ENCODE measurements at regions of chr17 and their contacts with region 1.

Region 1: DNA sequence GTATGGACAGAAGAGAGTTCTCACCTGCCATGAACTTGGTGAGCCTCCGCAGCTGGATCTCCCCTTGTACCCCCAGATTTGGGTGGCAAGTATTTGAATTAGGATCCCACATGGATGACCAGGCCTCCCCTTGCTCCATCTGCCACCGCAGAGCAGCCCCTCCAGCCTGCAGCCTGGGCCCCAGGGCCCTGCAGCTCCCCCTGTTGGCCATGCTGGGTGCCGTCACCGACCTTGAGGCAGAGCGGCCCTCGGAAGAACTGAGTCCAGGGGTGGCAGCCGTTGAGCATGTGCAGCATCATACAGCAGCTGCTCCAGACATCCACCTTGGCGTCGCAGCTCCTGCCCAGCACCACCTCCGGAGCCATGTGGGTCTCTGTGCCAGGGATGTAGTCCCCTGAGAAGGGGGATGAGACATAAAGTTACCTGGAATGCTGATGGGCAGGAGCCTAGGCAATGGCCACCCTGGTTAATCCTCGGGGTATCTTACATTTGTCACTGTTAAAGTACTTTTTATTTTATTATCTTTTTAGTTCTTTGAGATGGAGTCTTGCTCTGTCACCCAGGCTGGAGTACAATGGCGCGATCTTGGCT is 9.0 kb upstream of the SPATA32 start:
- DNase-seq: peak; percentile 81
- ATAC-seq: peak; percentile 94
- H3K4me3 Mint-ChIP-seq: no peak overlapping the region
- H3K27ac Mint-ChIP-seq: no peak overlapping the region
- H3K4me1 Mint-ChIP-seq: peaks cover 8% of the 10 kb centered on the region
- H3K27me3 Mint-ChIP-seq: no peaks in the 10 kb centered on the region
- CTCF ChIP-seq: peak; percentile 79

Region 2: DNA sequence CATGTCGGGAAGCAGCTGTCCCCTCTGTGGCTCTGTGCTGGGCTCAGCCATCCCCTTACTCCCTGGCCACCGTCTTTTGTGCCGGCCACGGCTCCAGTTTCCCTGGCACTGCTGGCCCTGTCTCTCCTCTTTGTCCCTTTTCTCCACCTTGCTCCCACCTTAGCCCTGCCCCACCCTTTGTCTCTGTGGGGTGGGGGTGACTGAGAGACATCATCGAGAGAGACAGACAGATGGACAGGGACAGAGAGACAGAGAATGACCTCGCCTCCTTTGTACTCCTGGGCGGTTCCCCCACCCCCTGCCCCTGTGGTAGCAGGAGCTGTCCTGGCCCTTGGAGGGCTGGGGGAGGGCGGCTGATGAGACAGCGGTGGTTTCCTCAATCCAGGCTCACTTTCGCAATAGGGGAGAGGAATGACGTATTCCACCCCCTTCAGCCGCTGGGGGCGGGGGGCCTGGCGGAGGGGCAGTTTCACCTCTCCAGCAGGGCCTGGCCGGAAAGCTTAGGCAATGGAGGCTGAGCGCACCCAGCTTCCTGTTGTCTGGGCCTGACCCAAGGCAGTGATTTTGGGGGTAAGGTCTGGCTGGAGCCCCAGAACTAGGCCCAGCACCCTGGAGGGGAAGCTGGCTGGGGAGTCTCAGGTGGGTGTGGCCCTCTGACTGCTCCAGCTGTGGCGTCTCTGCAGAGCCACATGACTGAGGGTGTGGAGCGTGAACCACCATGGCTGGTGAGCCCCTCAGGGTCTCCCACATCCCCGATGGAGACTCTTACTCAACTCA is 42.0 kb before region 1 on chr17:
- CTCF ChIA-PET with region 1: interaction called, 23 read pairs
- POLR2A ChIA-PET with region 1: no interaction called
- DNase-seq: peak; percentile 59
- ATAC-seq: peak; percentile 27
- H3K4me3 Mint-ChIP-seq: no peak overlapping the region
- H3K27ac Mint-ChIP-seq: no peak overlapping the region
- H3K4me1 Mint-ChIP-seq: peaks cover 20% of the 10 kb centered on the region
- H3K27me3 Mint-ChIP-seq: peaks cover 26% of the 10 kb centered on the region
- CTCF ChIP-seq: no peak

Region 3: DNA sequence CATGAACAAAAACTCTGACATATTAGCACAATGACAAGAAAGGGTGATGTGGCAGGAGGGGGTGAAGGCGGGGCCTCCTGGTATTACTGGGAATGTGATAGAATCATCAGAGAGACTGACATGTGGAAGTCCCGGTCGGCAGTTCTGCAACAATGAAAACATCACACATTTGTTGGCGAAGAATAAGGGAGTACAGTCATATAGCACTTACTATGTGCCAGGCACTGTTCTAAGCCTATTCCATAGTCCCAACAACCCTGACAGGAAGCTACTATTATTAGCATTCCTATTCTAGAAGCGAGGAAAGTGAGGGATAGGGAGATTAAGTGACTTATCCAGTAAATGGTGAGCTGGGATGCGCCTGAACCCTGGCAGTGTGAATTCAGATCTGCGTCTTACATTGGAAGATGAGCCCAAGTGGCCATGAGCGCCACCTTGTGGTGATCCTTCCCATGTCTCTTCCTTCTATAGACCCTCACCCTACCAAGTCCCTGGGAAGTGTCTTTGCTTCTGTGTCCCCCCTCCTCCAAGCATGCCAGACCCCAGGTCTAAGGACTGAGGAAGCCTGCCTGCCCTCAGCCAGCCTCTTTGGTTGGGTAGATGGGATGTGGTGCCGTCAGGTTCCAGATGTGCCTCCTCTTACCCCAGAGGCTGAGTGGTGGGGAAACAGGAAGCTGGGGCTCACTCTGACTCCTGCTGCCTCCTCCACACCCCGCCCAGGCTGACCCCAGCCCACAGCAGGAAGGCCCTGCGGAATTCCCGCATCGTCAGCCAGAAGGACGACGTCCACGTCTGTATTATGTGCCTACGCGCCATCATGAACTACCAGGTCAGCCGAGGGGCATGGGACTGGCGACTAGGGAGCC is 35.3 kb before region 1 on chr17:
- CTCF ChIA-PET with region 1: interaction called, 23 read pairs
- POLR2A ChIA-PET with region 1: no interaction called
- DNase-seq: peak; percentile 94
- ATAC-seq: peak; percentile 69
- H3K4me3 Mint-ChIP-seq: no peak overlapping the region
- H3K27ac Mint-ChIP-seq: no peak overlapping the region
- H3K4me1 Mint-ChIP-seq: peaks cover 9% of the 10 kb centered on the region
- H3K27me3 Mint-ChIP-seq: peaks cover 63% of the 10 kb centered on the region
- CTCF ChIP-seq: peak; percentile 81

Region 4: DNA sequence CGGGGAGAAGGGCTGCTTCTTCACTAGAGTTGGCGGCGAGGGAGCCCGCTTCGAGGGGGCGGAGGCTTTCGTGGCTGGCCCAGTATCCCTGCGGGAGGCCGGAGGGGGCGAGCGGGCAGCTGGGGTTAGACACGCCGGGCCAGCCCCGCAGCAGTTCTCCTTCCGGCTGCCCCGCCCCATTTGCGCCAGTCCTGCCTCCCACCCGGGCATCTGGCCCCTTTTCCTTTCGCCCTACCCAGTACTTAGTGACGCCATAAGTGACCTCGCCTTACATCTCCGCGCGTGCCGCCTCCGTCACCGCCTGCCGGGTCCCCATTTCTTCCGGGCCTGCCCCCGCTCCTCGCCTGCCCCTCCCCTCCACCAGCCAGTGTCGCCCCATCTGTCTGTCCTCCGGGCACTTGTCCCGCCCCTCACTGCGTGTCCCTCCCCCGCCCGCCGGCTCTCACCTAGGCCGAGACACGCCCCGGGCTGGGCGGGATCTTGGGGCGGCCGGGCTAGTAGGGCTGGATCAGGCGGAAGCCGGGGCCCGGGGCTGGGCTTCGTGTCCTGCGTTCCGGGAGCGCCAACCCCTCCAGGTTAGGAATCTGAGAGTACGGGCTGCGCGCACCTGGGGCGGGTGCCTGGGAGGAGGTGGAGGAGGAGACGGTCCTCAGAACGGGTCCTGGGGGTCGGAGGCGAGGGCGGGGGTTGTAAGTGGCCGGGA is 23.3 kb before region 1 on chr17:
- CTCF ChIA-PET with region 1: interaction called, 29 read pairs
- POLR2A ChIA-PET with region 1: no interaction called
- DNase-seq: peak; percentile 99
- ATAC-seq: peak; percentile 87
- H3K4me3 Mint-ChIP-seq: peak overlapping the region; percentile 83
- H3K27ac Mint-ChIP-seq: peak overlapping the region; percentile 80
- H3K4me1 Mint-ChIP-seq: peaks cover 21% of the 10 kb centered on the region
- H3K27me3 Mint-ChIP-seq: peaks cover 2% of the 10 kb centered on the region
- CTCF ChIP-seq: no peak

Region 5: DNA sequence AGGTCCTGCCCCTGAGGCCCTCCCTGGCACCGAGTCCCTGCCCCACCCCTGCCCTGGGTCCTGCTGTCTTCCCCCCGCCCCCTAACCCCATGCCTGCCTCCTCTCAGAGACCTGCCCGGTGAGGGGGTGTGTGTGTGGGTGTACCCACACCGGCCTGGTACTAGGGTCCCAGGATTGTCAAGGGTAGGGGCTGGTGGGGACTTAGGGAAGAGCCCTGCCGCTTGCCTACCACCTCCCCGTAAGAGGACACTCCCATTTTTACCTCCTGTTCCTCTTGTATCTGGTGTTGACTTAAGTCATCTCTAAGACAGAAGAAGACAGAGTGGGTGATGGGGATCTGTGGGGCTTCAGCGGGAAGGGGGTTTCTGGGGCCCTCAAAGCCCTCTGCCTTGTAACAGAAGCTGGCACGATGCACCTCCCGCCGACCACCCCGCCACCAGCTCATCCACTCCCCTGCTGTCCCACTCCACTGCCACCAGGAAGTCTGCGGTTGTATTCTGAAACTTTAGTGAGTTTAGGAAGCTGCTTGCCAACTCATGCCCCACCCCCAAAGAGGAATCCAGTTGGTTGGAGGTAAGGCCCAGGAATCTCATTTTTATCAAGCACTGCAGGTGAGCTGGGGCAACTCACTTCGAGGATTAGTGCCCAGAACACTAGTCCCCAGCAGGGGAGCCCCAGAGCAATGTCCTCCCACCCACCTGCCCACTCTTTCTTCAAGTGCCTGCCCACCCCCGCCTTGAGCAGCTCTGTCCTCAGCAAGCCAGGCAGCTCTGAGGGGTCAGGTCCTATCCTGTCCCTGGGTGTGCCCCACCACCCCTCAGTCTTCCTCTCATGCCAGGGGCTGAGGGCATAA is 14.6 kb before region 1 on chr17:
- CTCF ChIA-PET with region 1: interaction called, 32 read pairs
- POLR2A ChIA-PET with region 1: no interaction called
- DNase-seq: no peak
- ATAC-seq: peak; percentile 46
- H3K4me3 Mint-ChIP-seq: no peak overlapping the region
- H3K27ac Mint-ChIP-seq: no peak overlapping the region
- H3K4me1 Mint-ChIP-seq: peaks cover 18% of the 10 kb centered on the region
- H3K27me3 Mint-ChIP-seq: peaks cover 10% of the 10 kb centered on the region
- CTCF ChIP-seq: no peak

Region 6: DNA sequence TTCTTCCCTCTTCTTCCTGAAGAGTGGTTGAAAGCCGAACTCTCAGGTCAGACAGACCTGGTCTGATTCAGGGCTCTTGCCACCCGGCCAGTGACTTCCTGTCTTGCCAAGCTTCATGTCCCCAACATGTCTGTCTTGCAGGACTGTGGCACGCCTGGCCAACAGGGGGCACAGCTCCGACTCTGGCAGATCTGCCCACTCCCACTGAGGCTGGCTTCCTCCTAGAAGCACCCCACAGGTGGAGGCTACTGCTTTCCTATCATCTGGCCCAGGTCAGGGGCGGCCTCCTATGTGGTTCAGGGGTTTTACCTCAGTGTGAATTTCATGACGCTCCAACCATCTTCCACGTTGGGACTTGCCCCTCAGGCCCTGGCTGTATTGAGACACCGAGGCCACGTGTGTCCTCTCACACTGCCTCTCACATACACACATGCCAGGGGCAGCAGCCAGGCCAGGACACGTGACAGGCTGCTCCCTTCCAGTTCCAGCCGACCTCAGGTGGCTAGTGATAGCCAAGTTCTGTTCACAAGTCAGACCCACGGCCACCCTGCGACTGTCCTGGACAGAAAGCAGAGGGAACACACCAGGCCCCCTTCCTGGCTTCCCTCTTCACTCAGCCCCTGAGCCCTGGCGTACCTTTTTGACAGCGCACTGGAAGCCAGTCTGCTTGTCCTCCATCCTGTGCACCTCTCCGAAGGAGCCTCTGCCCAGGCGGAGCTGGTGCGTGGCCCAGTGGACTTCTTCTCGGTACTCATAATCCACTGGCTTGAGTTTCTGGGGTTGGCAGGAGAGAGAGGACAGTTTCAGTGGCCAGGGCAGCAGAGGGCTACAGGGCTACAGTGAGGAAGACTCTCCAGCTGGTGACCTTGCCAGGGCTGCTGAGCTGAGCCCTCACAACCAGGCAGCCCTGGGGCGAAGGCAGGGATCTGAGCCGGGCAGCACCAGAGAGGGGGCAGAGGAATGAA is 13.5 kb after region 1 on chr17:
- CTCF ChIA-PET with region 1: interaction called, 28 read pairs
- POLR2A ChIA-PET with region 1: no interaction called
- DNase-seq: peak; percentile 51
- ATAC-seq: peak; percentile 69; the same call in 1 of the 2 replicates
- H3K4me3 Mint-ChIP-seq: no peak overlapping the region
- H3K27ac Mint-ChIP-seq: peak overlapping the region; percentile 85
- H3K4me1 Mint-ChIP-seq: no peaks in the 10 kb centered on the region
- H3K27me3 Mint-ChIP-seq: no peaks in the 10 kb centered on the region
- CTCF ChIP-seq: no peak; the same call in 1 of the 2 replicates

Region 7: GRCh38 chr17:45394913-45395568 is 124.1 kb after region 1 on chr17:
- CTCF ChIA-PET with region 1: interaction called, 40 read pairs
- POLR2A ChIA-PET with region 1: no interaction called
- DNase-seq: peak; percentile 88
- ATAC-seq: peak; percentile 81
- H3K4me3 Mint-ChIP-seq: peak overlapping the region; percentile 34
- H3K27ac Mint-ChIP-seq: no peak overlapping the region
- H3K4me1 Mint-ChIP-seq: peaks cover 15% of the 10 kb centered on the region
- H3K27me3 Mint-ChIP-seq: peaks cover 3% of the 10 kb centered on the region; the same call in 1 of the 2 replicates
- CTCF ChIP-seq: peak; percentile 71

Measured in WTC11 (cell line).